Activated B cell treated with CpG ODN at 0.5 μM for 24 hours (primary cell): ENCODE measurements at regions of chr6 and their contacts with region 1.

Region 1: DNA sequence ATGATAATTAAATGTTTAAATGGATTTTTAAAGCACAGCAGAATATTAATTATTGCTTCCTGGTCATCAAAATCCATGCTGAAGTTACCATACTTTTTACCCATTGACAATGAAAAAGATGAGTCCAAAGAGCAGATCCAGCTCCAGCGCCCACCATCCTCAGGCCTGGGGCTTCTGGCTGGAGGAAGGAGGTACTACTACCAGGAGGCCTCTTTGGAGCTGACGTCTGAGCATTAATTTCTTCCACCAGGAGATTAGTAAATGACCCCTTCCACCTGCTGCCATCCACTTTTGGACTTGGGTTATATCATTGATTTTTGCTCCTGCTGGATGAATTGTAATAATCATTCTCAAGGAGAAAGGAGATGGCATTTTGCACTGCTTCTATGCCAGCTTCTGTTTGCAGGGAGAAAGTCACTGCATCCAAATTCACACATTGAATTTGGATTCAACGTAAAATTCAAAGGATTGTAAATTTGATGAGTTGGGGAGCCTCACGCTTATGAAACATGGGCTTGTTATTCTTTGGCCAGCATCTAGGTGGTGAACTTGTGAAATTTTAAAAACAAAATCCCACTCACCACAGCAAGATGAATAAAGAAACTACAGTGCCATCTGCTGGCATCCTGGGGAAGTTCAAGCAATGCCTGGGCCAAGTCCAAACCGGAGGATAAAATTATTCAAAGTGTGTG is 121.8 kb downstream of the SASH1 start:
- DNase-seq: peak; percentile 36
- ATAC-seq: peak; percentile 74
- H3K4me3 Mint-ChIP-seq: no peak overlapping the region
- H3K27ac Mint-ChIP-seq: no peak overlapping the region
- H3K4me1 Mint-ChIP-seq: peaks cover 4% of the 10 kb centered on the region
- H3K27me3 Mint-ChIP-seq: peaks cover 13% of the 10 kb centered on the region
- CTCF ChIP-seq: peak; percentile 87

Region 2: DNA sequence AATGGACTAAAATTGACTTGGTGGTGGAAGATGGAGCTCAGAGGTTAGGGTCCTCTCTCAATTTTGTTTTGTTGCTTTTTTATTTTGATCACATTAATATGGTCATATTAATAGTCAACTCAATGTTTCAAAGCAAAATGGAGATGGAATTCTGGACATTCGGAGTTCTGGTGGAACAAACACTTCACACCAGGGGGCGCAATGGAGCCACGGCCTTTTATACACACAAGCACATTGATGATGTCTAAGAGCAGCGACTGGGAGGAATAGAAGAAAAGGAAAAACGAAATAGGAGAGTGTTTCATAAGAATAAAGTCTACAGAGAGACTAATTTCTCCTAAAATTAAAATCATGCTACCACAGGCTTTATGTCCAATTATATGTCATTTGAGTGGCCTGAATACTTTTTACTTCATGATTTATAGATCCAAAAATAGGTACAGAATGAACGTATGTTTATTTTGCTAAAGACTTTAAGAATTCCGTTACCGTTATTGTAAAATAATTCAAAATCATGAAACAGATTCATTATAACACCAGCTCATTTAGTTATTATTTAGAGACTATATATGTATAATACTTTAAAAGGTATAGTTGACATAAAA is 319.4 kb before region 1 on chr6:
- CTCF ChIA-PET with region 1: interaction called, 3 read pairs
- POLR2A ChIA-PET with region 1: no interaction called
- intact Hi-C with region 1: loop called (anchors 1 kb)
- DNase-seq: peak; percentile 20
- ATAC-seq: no peak
- H3K4me3 Mint-ChIP-seq: no peak overlapping the region
- H3K27ac Mint-ChIP-seq: no peak overlapping the region
- H3K4me1 Mint-ChIP-seq: peaks cover 4% of the 10 kb centered on the region
- H3K27me3 Mint-ChIP-seq: peaks cover 6% of the 10 kb centered on the region
- CTCF ChIP-seq: no peak

Region 3: DNA sequence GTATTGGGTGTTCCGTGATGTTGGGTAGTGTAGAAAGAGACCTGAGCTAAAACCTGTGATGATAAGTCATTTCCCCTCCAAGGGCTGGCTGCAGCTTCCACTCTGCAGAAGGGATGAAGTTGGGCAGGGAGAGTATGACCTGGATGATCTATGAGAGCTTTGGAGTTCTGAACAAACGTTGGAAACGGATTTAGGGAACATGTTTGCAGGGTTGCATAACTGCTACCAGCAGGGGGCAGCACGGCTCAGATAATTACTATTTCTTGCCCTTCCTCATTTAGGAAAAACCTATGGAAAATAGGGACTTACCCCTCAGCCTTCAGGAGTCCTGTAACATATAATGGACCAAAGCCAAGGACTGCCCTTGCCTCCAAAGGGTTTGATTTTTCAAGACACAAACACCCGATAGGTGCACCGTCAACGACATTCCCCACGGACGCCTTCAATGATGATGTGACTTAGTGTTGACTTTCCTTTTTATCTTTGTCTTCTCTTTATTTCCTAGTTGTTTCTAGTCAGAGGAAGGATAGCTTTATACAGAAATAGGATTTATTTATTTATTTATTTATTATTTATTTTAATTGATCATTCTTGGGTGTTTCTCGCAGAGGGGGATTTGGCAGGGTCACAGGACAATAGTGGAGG is 286.8 kb before region 1 on chr6:
- CTCF ChIA-PET with region 1: interaction called, 4 read pairs
- POLR2A ChIA-PET with region 1: no interaction called
- intact Hi-C with region 1: loop called (anchors 1 kb)
- DNase-seq: no peak
- ATAC-seq: no peak
- H3K4me3 Mint-ChIP-seq: no peak overlapping the region
- H3K27ac Mint-ChIP-seq: no peak overlapping the region
- H3K4me1 Mint-ChIP-seq: no peaks in the 10 kb centered on the region
- H3K27me3 Mint-ChIP-seq: peaks cover 8% of the 10 kb centered on the region
- CTCF ChIP-seq: no peak

Region 4: DNA sequence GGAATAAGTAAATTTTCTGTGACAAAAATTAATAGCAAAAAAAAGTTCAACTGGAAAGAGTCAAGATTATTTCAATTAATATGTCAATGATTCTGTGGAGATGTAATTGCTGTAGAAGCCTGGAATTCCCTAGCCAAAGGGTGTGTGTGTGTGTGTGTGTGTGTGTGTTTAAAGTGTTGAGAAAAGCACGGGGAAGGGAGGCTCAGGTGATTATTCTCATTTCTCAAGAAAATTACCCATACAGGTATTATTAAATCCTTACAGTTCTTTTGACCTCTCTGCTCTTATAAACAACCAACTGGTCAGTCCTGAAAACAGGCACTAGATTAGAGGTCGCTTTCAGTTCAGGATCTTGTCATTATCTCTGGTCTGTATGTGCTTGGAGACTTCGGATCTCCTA is 251.1 kb before region 1 on chr6:
- CTCF ChIA-PET with region 1: no interaction called
- POLR2A ChIA-PET with region 1: no interaction called
- intact Hi-C with region 1: no loop called
- DNase-seq: no peak
- ATAC-seq: no peak
- H3K4me3 Mint-ChIP-seq: no peak overlapping the region
- H3K27ac Mint-ChIP-seq: no peak overlapping the region
- H3K4me1 Mint-ChIP-seq: peaks cover 4% of the 10 kb centered on the region
- H3K27me3 Mint-ChIP-seq: peaks cover 37% of the 10 kb centered on the region
- CTCF ChIP-seq: no peak

Region 5: DNA sequence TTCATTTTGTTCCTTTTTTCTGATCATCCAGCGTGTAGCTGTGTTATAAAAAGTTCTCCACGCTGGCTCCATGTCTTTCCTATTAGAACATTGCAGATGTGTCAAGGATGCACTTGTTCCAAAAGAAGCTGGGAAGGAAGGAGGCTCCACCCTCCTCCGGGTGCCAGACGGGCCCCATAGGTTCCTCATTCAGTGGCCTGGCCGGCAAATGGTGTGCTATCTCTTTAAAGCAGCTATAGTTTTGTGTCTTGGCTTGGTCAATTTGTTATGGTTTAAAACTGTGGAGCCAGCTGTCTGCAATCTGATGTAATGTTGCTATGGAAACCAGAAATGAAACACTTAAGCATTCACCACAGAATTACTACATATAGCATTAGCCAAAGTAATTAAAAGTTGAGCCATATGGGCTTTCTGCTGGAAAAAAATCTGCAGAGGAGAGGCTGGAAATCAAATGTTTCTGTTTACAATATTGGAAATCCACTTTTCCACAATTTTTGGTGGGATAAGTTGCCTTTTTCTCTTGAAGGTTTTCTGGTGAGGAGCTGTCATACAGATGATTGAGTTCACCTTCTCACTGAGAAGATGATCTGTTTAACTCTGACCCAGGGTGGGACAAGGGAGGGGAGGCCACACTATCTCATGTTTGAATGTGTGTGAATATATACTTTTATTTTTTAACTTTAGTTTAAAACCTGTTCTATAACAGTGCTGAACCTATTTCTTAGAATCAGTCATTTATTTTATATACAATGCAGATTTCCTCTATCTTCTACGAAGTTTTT is 45.5 kb after region 1 on chr6:
- CTCF ChIA-PET with region 1: no interaction called
- POLR2A ChIA-PET with region 1: no interaction called
- intact Hi-C with region 1: no loop called
- DNase-seq: no peak
- ATAC-seq: peak; percentile 74
- H3K4me3 Mint-ChIP-seq: no peak overlapping the region
- H3K27ac Mint-ChIP-seq: no peak overlapping the region
- H3K4me1 Mint-ChIP-seq: peaks cover 10% of the 10 kb centered on the region
- H3K27me3 Mint-ChIP-seq: peaks cover 24% of the 10 kb centered on the region
- CTCF ChIP-seq: no peak

Region 6: DNA sequence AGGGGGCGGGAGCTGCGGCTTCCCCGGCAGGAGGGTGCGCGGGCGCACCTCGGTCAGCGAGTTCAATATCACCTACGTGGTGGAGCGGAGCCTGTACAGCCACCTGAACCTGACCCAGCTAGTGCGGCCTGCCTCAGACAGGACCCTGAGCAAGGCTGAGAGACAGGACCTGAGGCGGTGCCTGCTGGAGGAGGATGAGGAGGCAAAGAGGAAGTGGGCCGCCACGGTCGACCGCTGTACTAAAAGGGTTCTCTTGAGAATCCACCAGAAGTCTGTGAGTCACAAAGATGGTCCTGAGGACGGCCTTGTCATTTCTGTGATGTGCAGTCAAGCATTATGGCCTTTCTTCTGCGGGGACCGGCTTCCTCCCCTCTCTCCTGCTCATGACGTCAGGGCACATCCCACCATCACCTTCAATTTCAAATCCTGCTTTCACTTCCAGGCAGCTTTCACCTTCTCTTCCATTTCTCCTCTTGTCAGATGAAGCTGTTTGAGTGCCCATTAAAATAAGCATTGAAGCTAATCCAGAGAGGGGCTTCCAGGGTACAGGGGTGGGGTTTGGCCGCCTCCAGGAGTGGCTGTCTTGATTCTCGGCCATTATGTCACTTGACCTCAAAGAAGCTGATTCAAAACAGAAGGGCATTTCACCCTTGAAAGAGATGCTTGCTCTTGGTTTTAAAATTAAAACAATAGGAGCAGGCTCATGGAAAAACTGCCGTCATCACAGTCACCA is 55.8 kb after region 1 on chr6:
- CTCF ChIA-PET with region 1: no interaction called
- POLR2A ChIA-PET with region 1: no interaction called
- intact Hi-C with region 1: loop called (anchors 2 kb)
- DNase-seq: peak; percentile 68
- ATAC-seq: peak; percentile 96
- H3K4me3 Mint-ChIP-seq: peak overlapping the region; percentile 64
- H3K27ac Mint-ChIP-seq: peak overlapping the region; percentile 82
- H3K4me1 Mint-ChIP-seq: peaks cover 66% of the 10 kb centered on the region
- H3K27me3 Mint-ChIP-seq: no peaks in the 10 kb centered on the region
- CTCF ChIP-seq: no peak